G401 (cell line): ENCODE measurements at regions of chr17 and their contacts with region 1.

Region 1: GRCh38 chr17:69581061-69581961 is 166.8 kb downstream of the MAP2K6 start:
- DNase-seq: no peak

Region 2: DNA sequence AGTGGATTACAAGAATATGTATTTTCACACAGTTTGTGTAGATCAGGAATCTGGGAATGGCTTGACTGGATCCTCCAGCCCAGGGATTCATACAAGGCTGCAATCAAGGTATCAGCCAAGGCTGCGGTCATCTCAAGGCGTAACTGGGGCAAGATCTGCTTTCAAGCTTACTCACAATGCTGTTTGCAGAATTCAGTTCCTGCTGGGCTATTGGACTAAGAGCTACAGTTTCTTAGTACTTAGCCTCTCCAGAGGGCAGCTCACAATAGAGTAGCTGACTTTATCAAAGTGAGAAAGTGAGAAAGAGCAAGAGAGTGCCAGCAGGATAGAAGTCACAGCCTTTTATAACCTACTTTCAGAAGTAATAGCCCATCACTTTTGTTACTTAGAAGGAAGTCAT is 44.2 kb after region 1 on chr17:
- in situ Hi-C with region 1: no loop called
- DNase-seq: no peak

Region 3: GRCh38 chr17:69723742-69724141 is 142.4 kb after region 1 on chr17:
- in situ Hi-C with region 1: loop called (anchors 25 kb)
- DNase-seq: no peak